ENCODE measurements at regions of chr16 and their contacts with region 1.

Region 1: GRCh38 chr16:25048146-25048618 is 33.0 kb upstream of the ARHGAP17 start:
- DNase-seq: no peak
- ATAC-seq: no peak
- H3K4me3 ChIP-seq: peak overlapping the region; percentile 46
- H3K27ac ChIP-seq: peak overlapping the region; percentile 91 to 95
- H3K4me1 ChIP-seq: peaks cover 64% of the 10 kb centered on the region
- CTCF ChIP-seq: no peak
- EP300 ChIP-seq: no peak
- POLR2A ChIP-seq: no peak
- RAD21 ChIP-seq: no peak

Region 2: GRCh38 chr16:25066747-25067631 is 18.8 kb after region 1 on chr16:
- CTCF ChIA-PET with region 1: no interaction called
- POLR2A ChIA-PET with region 1: interaction called, 12 read pairs
- DNase-seq: peak; percentile 75 to 85
- ATAC-seq: peak; percentile 95 to 99
- H3K4me3 ChIP-seq: peak overlapping the region; percentile 76
- H3K27ac ChIP-seq: peak overlapping the region; percentile 82 to 92
- H3K4me1 ChIP-seq: no peaks in the 10 kb centered on the region
- CTCF ChIP-seq: no peak
- EP300 ChIP-seq: no peak
- POLR2A ChIP-seq: peak; percentile 90
- RAD21 ChIP-seq: no peak

Region 3: GRCh38 chr16:25161753-25162367 is 113.7 kb after region 1 on chr16:
- CTCF ChIA-PET with region 1: no interaction called
- POLR2A ChIA-PET with region 1: no interaction called
- DNase-seq: no peak
- ATAC-seq: no peak
- H3K4me3 ChIP-seq: no peak overlapping the region
- H3K27ac ChIP-seq: no peak overlapping the region
- H3K4me1 ChIP-seq: no peaks in the 10 kb centered on the region
- CTCF ChIP-seq: no peak
- EP300 ChIP-seq: no peak
- POLR2A ChIP-seq: no peak
- RAD21 ChIP-seq: no peak